ENCODE measurements at regions of chr3 and their contacts with region 1.

Region 1: GRCh38 chr3:3015185-3016089 is 94.7 kb downstream of the IL5RA start:
- DNase-seq: peak; percentile 15
- ATAC-seq: peak; percentile 91
- H3K4me3 ChIP-seq: no peak overlapping the region
- H3K27ac ChIP-seq: no peak overlapping the region
- H3K4me1 ChIP-seq: no peaks in the 10 kb centered on the region
- H3K27me3 ChIP-seq: no peaks in the 10 kb centered on the region
- CTCF ChIP-seq: peak; percentile 74
- EP300 ChIP-seq: no peak
- POLR2A ChIP-seq: no peak
- RAD21 ChIP-seq: no peak

Region 2: GRCh38 chr3:1082108-1082507 is 1933.3 kb before region 1 on chr3:
- CTCF ChIA-PET with region 1: no interaction called
- POLR2A ChIA-PET with region 1: no interaction called
- in situ Hi-C with region 1: no loop called
- intact Hi-C with region 1: loop called (anchors 5 kb)
- DNase-seq: peak; percentile 1
- ATAC-seq: no peak
- H3K4me3 ChIP-seq: no peak overlapping the region
- H3K27ac ChIP-seq: no peak overlapping the region
- H3K4me1 ChIP-seq: no peaks in the 10 kb centered on the region
- H3K27me3 ChIP-seq: no peaks in the 10 kb centered on the region
- CTCF ChIP-seq: no peak
- EP300 ChIP-seq: no peak
- POLR2A ChIP-seq: no peak
- RAD21 ChIP-seq: no peak

Region 3: GRCh38 chr3:1275495-1275894 is 1739.9 kb before region 1 on chr3:
- CTCF ChIA-PET with region 1: no interaction called
- POLR2A ChIA-PET with region 1: no interaction called
- in situ Hi-C with region 1: no loop called
- intact Hi-C with region 1: loop called (anchors 5 kb)
- DNase-seq: no peak
- ATAC-seq: no peak
- H3K4me3 ChIP-seq: no peak overlapping the region
- H3K27ac ChIP-seq: no peak overlapping the region
- H3K4me1 ChIP-seq: no peaks in the 10 kb centered on the region
- H3K27me3 ChIP-seq: no peaks in the 10 kb centered on the region
- CTCF ChIP-seq: no peak
- EP300 ChIP-seq: no peak
- POLR2A ChIP-seq: no peak
- RAD21 ChIP-seq: no peak

Measured in HepG2 (cell line).